Mammary epithelial cell (primary cell): ENCODE measurements at regions of chr17 and their contacts with region 1.

Region 1: DNA sequence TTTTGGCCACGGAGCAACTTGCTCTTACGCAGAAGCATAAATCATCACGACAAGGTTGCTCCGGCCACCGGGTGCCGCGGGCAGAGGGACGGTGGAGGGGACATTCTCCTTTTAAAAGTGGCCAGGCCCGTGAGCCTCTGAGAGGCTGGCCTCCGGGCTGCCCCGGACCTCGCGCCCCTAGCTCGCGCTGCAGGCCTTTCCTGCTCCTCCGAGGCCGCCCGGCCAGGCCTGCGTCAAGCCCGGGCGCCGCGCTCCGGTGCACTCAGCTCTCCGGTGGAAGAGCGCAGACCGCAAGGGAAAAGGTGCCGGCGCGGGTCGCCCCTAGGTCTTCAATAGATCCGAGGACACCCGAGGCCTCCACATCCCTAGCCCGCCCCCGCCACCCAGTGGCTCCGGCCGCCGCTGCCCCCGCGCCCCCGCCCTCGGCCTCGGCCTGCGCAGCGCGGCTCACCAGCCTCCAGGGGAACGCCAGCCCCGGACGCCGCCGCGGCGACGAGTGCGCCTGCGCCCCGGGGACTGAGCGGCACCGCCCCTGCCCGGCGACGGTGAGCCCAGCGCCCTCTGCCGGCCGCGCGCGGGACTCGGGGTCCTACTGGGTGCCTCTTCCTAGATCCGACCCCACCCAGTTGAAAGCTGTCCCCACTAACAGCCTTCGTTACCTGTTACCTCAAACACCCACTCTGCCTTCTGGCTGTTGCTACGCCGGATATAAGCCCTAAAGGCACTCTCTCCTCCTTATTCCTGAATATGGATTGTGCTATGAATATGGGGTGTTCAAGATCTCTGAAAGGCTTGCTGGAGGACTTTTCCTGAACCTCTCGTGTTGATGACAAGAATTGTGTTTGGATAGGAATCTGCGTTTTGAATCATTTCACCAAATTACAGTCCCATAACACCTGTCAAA is at the start of gene LYRM9:
- DNase-seq: peak; percentile 78
- H3K4me3 ChIP-seq: peak within 1 kb of the TSS; percentile 54 to 68 (median 58)
- H3K27ac ChIP-seq: no peak within 1 kb of the TSS
- H3K4me1 ChIP-seq: no peaks in the 10 kb centered on the region
- H3K27me3 ChIP-seq: no peaks in the 10 kb centered on the region
- CTCF ChIP-seq: peak; percentile 74 to 78
- total RNA-seq, gene LYRM9: 4.3 to 9.8 TPM

Region 2: GRCh38 chr17:28112220-28113005 is 219.3 kb after region 1 on chr17:
- CTCF ChIA-PET with region 1: no interaction called
- dilution Hi-C with region 1: no loop called
- in situ Hi-C with region 1: no loop called
- intact Hi-C with region 1: loop called (anchors 10 kb)
- DNase-seq: no peak
- H3K4me3 ChIP-seq: no peak overlapping the region
- H3K27ac ChIP-seq: no peak overlapping the region
- H3K4me1 ChIP-seq: peaks cover 9% of the 10 kb centered on the region
- H3K27me3 ChIP-seq: no peaks in the 10 kb centered on the region
- CTCF ChIP-seq: no peak

Region 3: GRCh38 chr17:28252436-28252835 is 359.3 kb after region 1 on chr17:
- CTCF ChIA-PET with region 1: no interaction called
- dilution Hi-C with region 1: no loop called
- in situ Hi-C with region 1: no loop called
- intact Hi-C with region 1: loop called (anchors 2 kb)
- DNase-seq: peak; percentile 83
- H3K4me3 ChIP-seq: no peak overlapping the region
- H3K27ac ChIP-seq: no peak overlapping the region
- H3K4me1 ChIP-seq: peaks cover 15% of the 10 kb centered on the region
- H3K27me3 ChIP-seq: no peaks in the 10 kb centered on the region
- CTCF ChIP-seq: no peak